Right ventricle myocardium inferior (tissue), 1 donor: ENCODE measurements at regions of chr11 and their contacts with region 1.

Region 1: DNA sequence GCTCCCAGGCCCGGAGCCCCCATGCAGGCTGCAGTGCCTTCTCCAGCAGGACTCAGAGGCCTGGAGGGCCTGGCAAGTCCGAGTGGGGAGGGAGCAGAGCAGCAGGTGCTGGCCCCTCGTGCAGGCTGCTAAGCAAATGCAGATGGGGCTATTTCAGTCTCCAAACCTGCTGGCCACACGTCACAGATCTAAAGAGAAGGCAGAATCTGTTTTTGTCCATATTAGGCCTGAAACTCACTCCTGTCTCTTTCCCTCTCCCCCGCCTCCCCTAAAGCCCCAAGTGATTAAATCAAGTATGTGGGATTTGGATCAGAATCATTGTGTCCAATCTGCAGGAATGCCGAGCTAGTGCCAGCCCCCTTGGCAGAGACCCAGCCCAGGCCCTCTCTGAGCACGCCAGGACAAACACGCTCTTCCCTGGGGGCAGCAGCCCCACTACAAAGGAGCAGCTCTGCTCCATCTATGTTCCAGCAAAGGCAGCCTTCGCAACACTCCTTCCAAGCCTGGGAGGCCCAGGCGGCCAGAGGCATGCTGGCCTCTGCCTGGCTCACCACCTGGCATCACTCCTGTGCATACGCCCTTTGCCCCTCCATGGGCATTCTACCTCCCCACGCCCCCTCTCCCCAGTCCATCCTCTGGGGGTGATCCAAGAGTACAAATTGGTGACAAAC is 26.5 kb downstream of the RPL27A start:
- DNase-seq: peak; percentile 94
- ATAC-seq: peak; percentile 84

Region 2: GRCh38 chr11:8442301-8442700 is 266.8 kb before region 1 on chr11:
- intact Hi-C with region 1: no loop called
- DNase-seq: no peak
- ATAC-seq: no peak

Region 3: GRCh38 chr11:8768625-8769333 is 59.6 kb after region 1 on chr11:
- intact Hi-C with region 1: loop called (anchors 5 kb)
- DNase-seq: no peak
- ATAC-seq: peak; percentile 88

Region 4: GRCh38 chr11:8832571-8833260 is 123.6 kb after region 1 on chr11:
- intact Hi-C with region 1: no loop called
- DNase-seq: no peak
- ATAC-seq: peak; percentile 40